Activated naive CD8-positive, alpha-beta T cell treated with anti-CD3 and anti-CD28 coated beads, Interleukin-2, amount 10 ng/mL, durations not matched to agents 7 days and 5 days (primary cell): ENCODE measurements at regions of chr1 and their contacts with region 1.

Region 1: GRCh38 chr1:28648474-28649198 is at the start of gene RNU11:
- DNase-seq: peak; percentile 75
- ATAC-seq: peak; percentile 82
- H3K4me3 Mint-ChIP-seq: peak within 1 kb of the TSS; percentile 87
- H3K27ac Mint-ChIP-seq: peak within 1 kb of the TSS; percentile 98
- H3K4me1 Mint-ChIP-seq: peaks cover 21% of the 10 kb centered on the region
- H3K27me3 Mint-ChIP-seq: no peaks in the 10 kb centered on the region
- total RNA-seq, gene RNU11: not detected

Region 2: GRCh38 chr1:28552758-28553663 is 95.6 kb before region 1 on chr1 and contains the start of gene TRNAU1AP:
- POLR2A ChIA-PET with region 1: interaction called, 16 read pairs
- DNase-seq: peak; percentile 98
- ATAC-seq: peak; percentile 95
- H3K4me3 Mint-ChIP-seq: peak within 1 kb of the TSS; percentile 93
- H3K27ac Mint-ChIP-seq: peak within 1 kb of the TSS; percentile 96
- H3K4me1 Mint-ChIP-seq: peaks cover 20% of the 10 kb centered on the region
- H3K27me3 Mint-ChIP-seq: no peaks in the 10 kb centered on the region
- total RNA-seq, gene TRNAU1AP: 54.2 to 58.9 TPM

Region 3: DNA sequence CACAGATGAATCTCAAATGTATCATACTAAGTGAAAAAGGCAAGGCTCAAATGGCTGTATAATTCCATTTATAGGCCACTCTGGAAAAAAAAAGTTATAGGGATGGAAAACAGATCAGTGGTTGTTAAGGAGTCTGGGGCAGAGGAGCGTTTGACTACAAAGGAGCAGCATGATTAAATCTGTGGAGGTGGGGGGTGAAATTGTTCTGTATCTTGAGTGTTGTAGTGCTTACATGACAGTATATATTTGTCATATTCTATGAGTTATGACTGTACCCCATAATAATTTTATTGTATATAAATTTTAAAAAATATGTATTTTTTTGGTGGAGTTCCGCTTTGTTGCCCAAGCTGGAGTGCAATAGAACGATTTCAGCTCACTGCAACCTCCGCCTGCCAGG is 16.1 kb before region 1 on chr1:
- POLR2A ChIA-PET with region 1: no interaction called
- DNase-seq: no peak
- ATAC-seq: no peak
- H3K4me3 Mint-ChIP-seq: no peak overlapping the region
- H3K27ac Mint-ChIP-seq: no peak overlapping the region
- H3K4me1 Mint-ChIP-seq: peaks cover 4% of the 10 kb centered on the region
- H3K27me3 Mint-ChIP-seq: no peaks in the 10 kb centered on the region

Region 4: DNA sequence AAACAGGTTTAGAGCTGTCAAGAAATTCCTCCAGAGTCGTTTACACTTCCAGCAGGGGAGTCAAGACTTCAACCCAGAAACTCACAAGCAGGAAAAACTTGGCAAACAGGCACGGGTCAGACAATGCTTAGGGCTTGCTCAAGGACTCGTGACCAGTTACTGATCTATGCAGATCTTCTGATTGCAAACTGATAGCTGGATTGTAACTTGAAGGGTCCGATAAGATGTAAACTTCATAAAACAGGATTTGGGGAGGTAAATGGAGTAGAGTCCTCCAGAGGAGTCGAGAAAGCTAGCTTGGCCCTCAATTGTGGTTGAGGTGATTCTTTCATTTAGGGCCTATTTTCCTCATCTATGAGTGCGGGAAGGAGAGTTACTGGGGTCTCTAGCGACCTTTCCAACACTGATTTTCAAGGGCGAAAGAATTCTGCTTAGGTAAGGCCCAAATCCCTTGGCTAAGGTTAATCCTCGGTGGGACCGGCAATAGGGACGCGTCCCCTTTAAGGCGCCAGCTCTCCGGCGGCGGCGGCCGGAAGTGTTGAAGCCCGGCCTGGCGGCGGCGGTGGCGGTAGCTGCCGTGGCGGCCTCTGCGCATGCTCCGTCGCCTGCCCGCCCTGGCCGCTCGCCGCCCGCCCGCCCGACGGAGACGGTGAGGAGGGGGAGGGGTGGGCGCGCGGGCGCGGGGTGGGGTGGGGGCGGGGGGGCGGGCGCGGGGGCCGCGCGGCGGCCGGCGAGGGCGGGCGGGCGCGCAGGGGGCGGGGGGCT is 19.7 kb after region 1 on chr1 and contains the start of gene GMEB1:
- POLR2A ChIA-PET with region 1: interaction called, 175 read pairs
- DNase-seq: peak; percentile 92
- ATAC-seq: peak; percentile 76
- H3K4me3 Mint-ChIP-seq: peak within 1 kb of the TSS; percentile 91
- H3K27ac Mint-ChIP-seq: peak within 1 kb of the TSS; percentile 97
- H3K4me1 Mint-ChIP-seq: peaks cover 13% of the 10 kb centered on the region
- H3K27me3 Mint-ChIP-seq: no peaks in the 10 kb centered on the region
- total RNA-seq, gene GMEB1: 31.7 to 32.7 TPM

Region 5: GRCh38 chr1:28736450-28737306 is 88.0 kb after region 1 on chr1 and contains the start of gene YTHDF2:
- POLR2A ChIA-PET with region 1: interaction called, 76 read pairs
- DNase-seq: peak; percentile 98
- ATAC-seq: peak; percentile 98
- H3K4me3 Mint-ChIP-seq: peak within 1 kb of the TSS; percentile 96
- H3K27ac Mint-ChIP-seq: peak within 1 kb of the TSS; percentile 94
- H3K4me1 Mint-ChIP-seq: peaks cover 22% of the 10 kb centered on the region
- H3K27me3 Mint-ChIP-seq: no peaks in the 10 kb centered on the region
- total RNA-seq, gene YTHDF2: 62.5 to 70.2 TPM

Region 6: DNA sequence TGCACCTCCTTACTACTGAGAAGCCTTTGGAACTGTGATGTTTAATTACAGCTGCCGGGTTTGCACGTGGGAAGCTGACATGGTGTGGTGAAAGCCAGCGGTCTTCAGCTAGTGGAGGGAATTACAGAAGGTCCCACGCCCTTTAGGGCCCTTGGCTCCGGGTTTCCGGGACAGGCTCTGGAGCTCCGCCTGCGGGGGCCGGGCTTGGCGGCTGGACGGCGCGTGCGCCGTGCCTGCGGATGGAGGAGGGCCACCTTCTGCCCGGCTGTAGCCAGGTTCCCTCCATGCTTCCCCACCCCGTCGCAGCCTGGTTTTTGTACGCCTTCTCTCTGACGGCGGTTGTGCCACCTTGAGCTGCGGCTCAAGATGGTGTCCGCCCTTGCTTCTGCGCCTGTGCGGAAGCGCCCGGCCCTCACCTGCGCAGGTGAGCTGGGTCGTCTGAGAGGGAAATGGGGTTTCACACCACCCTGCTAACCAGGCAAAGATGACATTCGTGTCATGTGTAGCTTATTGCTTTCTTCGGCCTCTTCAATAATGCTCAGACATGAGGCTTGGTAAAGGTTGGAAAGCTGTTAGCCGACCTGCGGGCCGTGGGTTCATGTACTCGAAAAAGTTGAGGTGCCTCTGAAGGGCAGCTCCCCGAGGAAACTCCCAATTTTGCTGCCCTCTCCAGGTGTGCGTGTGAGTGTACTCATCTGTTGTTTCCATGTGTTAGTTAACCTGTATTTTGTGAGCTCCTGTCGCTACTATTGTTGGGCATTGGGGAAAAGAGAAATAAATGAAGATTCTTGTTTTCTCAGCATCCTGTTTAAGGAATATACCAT is 126.7 kb after region 1 on chr1:
- POLR2A ChIA-PET with region 1: interaction called, 10 read pairs
- DNase-seq: peak; percentile 78
- ATAC-seq: peak; percentile 94
- H3K4me3 Mint-ChIP-seq: peak overlapping the region; percentile 84
- H3K27ac Mint-ChIP-seq: peak overlapping the region; percentile 54
- H3K4me1 Mint-ChIP-seq: peaks cover 3% of the 10 kb centered on the region
- H3K27me3 Mint-ChIP-seq: peaks cover 5% of the 10 kb centered on the region

Region 7: GRCh38 chr1:28914228-28915030 is 265.8 kb after region 1 on chr1 and contains the start of gene EPB41:
- POLR2A ChIA-PET with region 1: interaction called, 11 read pairs
- DNase-seq: peak; percentile 92
- ATAC-seq: peak; percentile 90
- H3K4me3 Mint-ChIP-seq: peak within 1 kb of the TSS; percentile 97
- H3K27ac Mint-ChIP-seq: peak within 1 kb of the TSS; percentile 96
- H3K4me1 Mint-ChIP-seq: peaks cover 39% of the 10 kb centered on the region
- H3K27me3 Mint-ChIP-seq: no peaks in the 10 kb centered on the region
- total RNA-seq, gene EPB41: 162 to 170 TPM